Astrocyte of the cerebellum (primary cell): ENCODE measurements at regions of chr7 and their contacts with region 1.

Region 1: GRCh38 chr7:102044984-102045673 is 227.7 kb downstream of the CUX1 start:
- DNase-seq: peak; percentile 87
- H3K4me3 ChIP-seq: no peak overlapping the region
- CTCF ChIP-seq: no peak

Region 2: DNA sequence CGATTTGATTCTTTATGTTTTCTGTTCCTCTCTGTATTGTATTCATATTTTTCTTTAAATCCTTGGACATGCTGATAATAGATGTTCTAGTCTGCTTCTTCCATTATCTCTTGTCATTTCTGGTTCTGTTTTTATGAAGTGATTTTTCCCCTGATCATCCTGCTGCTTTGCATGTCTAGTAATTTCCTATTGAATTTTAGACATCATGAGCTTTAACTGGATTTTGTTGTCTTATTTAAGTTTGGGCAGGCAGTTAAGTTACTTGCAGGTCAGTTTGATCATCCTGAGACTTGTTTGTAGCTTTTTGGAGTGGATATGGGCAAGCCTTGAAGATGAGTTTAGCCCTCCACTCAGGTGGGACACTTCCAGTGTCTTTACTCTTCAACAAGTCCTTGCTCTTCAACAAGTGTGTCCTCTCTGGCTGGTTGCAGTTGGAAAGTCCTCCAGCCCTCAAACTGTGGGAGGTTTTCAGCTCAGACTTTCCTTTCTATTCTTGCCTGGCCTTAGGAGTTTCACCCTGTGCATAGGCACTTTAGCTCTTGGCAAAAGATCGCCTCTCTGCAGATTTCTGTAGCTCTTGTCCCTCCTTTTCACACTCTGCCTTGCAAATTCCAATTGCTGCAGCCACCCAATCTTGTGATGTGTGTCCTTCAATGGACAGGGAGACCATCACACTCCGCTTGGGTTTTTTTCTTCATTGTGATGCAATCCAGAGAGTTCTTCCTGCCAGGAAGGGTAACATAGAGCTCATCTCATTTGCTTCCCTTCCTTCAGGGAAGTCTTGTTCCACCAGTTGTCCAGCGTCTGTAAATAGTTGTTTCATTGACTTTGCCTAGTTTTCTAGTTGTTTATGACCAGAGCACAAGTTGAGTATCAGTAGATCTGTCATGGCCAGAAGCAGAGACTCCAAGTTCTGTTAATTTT is 44.3 kb after region 1 on chr7:
- in situ Hi-C with region 1: loop called (anchors 5 kb)
- DNase-seq: no peak
- H3K4me3 ChIP-seq: no peak overlapping the region
- CTCF ChIP-seq: no peak

Region 3: DNA sequence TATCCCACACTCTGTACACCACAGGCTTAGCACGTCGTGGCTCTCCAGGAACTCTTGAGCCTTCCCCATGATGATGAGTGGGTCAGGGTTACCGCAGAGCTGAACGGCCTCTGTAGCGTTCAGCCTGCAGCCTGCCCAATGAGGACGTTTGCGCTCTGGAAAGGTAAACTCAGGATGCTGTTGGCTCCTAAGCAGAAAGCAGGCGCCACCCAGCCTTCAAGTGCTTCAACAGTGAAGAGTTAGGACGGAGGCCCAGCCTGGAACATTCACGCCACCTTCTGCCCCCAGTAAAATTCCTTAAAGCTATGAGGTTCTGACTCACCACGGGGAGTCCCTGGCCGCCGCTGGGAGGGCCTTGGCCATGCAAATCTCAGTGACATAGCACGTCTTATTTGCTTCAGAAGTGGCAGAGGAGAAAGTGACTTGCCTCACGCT is 80.0 kb after region 1 on chr7:
- in situ Hi-C with region 1: loop called (anchors 5 kb)
- DNase-seq: peak; percentile 34
- H3K4me3 ChIP-seq: no peak overlapping the region
- CTCF ChIP-seq: no peak